ENCODE measurements at regions of chr6 and their contacts with region 1.

Region 1: DNA sequence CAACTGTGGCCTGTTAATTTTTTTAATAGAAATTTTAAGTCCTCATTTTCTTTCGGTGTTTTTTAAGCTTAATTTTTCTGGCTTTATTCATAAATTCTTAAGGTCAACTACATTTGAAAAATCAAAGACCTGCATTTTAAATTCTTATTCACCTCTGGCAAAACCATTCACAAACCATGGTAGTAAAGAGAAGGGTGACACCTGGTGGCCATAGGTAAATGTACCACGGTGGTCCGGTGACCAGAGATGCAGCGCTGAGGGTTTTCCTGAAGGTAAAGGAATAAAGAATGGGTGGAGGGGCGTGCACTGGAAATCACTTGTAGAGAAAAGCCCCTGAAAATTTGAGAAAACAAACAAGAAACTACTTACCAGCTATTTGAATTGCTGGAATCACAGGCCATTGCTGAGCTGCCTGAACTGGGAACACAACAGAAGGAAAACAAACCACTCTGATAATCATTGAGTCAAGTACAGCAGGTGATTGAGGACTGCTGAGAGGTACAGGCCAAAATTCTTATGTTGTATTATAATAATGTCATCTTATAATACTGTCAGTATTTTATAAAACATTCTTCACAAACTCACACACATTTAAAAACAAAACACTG is 10.1 kb downstream of the HFE start:
- DNase-seq: no peak
- H3K4me3 ChIP-seq: no peak overlapping the region
- H3K27me3 ChIP-seq: no peaks in the 10 kb centered on the region
- CTCF ChIP-seq: peak; percentile 72

Region 2: GRCh38 chr6:24581084-24581669 is 1516.2 kb before region 1 on chr6:
- CTCF ChIA-PET with region 1: no interaction called
- POLR2A ChIA-PET with region 1: no interaction called
- DNase-seq: no peak
- H3K4me3 ChIP-seq: no peak overlapping the region
- H3K27me3 ChIP-seq: no peaks in the 10 kb centered on the region
- CTCF ChIP-seq: peak; percentile 90

Region 3: GRCh38 chr6:26031595-26032339 is 65.6 kb before region 1 on chr6:
- CTCF ChIA-PET with region 1: interaction called, 12 read pairs
- POLR2A ChIA-PET with region 1: no interaction called
- DNase-seq: peak; percentile 80
- H3K4me3 ChIP-seq: peak overlapping the region; percentile 45
- H3K27me3 ChIP-seq: no peaks in the 10 kb centered on the region
- CTCF ChIP-seq: peak; percentile 39; the same call in 1 of the 2 replicates

Measured in BJ (cell line).